Ovary (tissue), 10 donors: ENCODE measurements at regions of chr11 and their contacts with region 1.

Region 1: DNA sequence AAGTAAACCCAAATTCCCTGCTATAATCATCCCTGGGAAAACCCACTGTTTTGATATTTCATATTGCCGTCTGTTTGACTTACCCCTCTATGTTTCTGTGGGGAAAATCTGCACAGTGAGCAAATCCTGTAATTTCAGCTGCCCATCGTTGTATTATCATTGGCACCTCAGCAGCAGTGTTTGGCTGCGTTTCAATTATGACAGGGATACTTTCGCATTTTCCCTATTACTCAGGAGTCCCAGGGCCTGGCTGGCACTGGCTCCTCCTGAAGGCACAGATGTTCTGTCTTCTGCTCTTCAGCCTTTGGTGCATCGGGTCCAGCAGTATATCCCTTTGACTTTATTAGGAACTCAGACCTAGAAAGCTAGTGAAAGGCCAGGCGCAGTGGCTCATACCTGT is 12.2 kb upstream of the MMP12 start:
- DNase-seq: no peak
- H3K4me3 ChIP-seq: no peak overlapping the region
- H3K27ac ChIP-seq: no peak overlapping the region
- H3K4me1 ChIP-seq: no peaks in the 10 kb centered on the region
- H3K27me3 ChIP-seq: no peaks in the 10 kb centered on the region
- CTCF ChIP-seq: no peak
- EP300 ChIP-seq: no peak
- POLR2A ChIP-seq: no peak

Region 2: DNA sequence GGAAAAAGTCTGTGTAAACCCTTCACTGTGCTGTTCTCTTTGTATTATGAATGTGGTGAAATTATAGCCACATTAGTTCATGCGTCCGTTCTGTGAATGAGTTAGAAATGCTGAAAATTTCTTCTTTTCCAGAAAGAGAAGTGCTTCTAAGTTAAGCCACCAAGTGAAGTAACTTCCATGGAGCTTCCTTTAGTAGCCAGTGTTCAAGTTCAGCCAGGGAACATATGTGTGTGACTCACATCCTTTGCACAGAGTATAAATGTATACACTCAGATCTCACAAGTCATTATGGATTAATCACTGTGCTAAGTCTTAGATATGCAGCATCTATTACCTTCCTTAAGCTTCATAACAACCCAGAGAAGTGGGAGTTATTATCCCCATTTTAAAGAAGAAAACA is 159.1 kb before region 1 on chr11:
- intact Hi-C with region 1: no loop called
- DNase-seq: no peak
- H3K4me3 ChIP-seq: no peak overlapping the region
- H3K27ac ChIP-seq: no peak overlapping the region
- H3K4me1 ChIP-seq: no peaks in the 10 kb centered on the region
- H3K27me3 ChIP-seq: no peaks in the 10 kb centered on the region
- CTCF ChIP-seq: no peak
- EP300 ChIP-seq: no peak
- POLR2A ChIP-seq: no peak

Region 3: DNA sequence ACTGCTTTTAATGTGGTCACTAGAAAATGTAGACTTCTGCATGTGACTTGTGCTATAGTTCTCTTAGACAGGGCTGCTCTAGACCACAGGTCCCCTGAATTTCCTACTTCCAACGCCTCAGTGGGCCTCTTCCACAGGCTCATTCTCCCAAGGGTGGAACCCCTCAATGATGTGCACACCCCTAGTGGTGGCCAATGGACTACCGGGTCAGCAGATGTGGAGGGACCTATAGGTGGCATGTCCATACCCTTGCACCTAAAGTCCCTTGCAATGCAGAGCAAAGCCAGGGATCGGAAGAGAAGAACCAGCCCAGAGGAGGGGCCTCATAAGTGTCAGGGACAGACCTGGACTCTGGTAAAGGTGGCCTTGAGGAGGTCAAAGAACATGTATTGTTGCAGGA is 48.5 kb after region 1 on chr11:
- intact Hi-C with region 1: loop called in 1 of 4 experiments (anchors 5 kb)
- DNase-seq: no peak
- H3K4me3 ChIP-seq: no peak overlapping the region
- H3K27ac ChIP-seq: no peak overlapping the region
- H3K4me1 ChIP-seq: no peaks in the 10 kb centered on the region
- H3K27me3 ChIP-seq: no peaks in the 10 kb centered on the region
- CTCF ChIP-seq: no peak
- EP300 ChIP-seq: no peak
- POLR2A ChIP-seq: no peak

Region 4: DNA sequence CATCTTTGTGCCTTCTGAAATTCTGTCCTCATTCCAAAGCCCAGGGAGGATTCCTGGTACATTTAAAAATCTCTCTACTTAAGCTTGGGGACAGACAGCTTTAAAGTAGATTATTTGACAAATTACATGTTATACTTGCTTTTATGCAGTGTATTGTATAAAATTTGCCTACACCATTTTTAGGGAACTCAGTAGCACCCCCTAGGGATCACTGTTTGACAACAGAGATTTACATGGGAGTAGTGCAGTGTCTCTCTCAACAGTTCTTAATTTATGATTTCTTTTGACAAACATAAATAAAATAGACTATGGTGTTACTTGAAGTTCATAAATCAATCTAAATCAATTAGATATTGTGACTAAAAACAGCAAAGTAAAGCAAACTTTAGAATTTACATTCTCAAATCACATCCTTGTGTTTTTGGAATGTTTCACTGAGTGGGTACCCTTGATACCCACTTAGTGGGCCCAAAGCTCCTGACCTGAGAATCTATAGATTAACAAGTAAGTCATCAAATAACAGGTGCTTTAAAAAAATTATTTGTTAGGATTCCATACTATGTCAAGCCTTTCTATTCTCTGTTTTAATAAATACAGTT is 651.0 kb after region 1 on chr11:
- intact Hi-C with region 1: no loop called
- DNase-seq: no peak
- H3K4me3 ChIP-seq: no peak overlapping the region
- H3K27ac ChIP-seq: no peak overlapping the region
- H3K4me1 ChIP-seq: peaks cover 2% of the 10 kb centered on the region
- H3K27me3 ChIP-seq: no peaks in the 10 kb centered on the region
- CTCF ChIP-seq: no peak
- EP300 ChIP-seq: no peak
- POLR2A ChIP-seq: no peak

Region 5: GRCh38 chr11:104713401-104713800 is 1826.4 kb after region 1 on chr11:
- intact Hi-C with region 1: loop called in 1 of 4 experiments (anchors 5 kb)
- DNase-seq: no peak
- H3K4me3 ChIP-seq: no peak overlapping the region
- H3K27ac ChIP-seq: no peak overlapping the region
- H3K4me1 ChIP-seq: no peaks in the 10 kb centered on the region
- H3K27me3 ChIP-seq: no peaks in the 10 kb centered on the region
- CTCF ChIP-seq: no peak
- EP300 ChIP-seq: no peak
- POLR2A ChIP-seq: no peak